Heart left ventricle (tissue), 16 donors: ENCODE measurements at regions of chr3 and their contacts with region 1.

Region 1: GRCh38 chr3:14810070-14810784 is 8.5 kb upstream of the FGD5 start:
- DNase-seq: peak; percentile 61 to 73 (median 65)
- ATAC-seq: peak; percentile 56 to 77 (median 69)
- H3K4me3 ChIP-seq: peak overlapping the region; percentile 56 to 95 (median 77)
- H3K27ac ChIP-seq: peak overlapping the region; percentile 79 to 97 (median 90)
- H3K4me1 ChIP-seq: peaks cover 3 to 67% (median 38%) of the 10 kb centered on the region in 12 donors
- H3K27me3 ChIP-seq: peaks cover 0 to 35% (median 11%) of the 10 kb centered on the region in 9 donors
- CTCF ChIP-seq: no peak
- POLR2A ChIP-seq: no peak

Region 2: DNA sequence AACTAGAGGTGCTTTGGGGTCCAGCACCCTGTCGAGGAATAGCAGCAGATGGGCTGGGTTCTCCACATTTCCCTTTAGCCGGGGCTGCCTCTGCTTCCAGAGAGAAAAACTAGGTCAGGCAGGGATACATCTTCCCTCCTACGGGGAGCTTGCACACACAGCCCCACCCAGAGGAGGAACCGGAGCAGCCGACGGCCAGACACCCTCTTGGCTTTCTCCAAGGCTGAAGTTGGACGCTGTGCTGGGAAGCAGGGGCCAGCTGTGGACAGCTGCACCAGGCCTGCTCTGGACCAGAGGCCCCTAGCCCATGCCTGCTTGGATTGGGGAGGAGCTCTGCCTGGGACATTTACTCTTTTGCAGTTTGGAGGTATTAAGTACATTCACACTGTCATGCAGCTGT is 92.5 kb after region 1 on chr3:
- intact Hi-C with region 1: loop called in 1 of 10 experiments (anchors 2 kb)
- DNase-seq: peak; percentile 76 to 87 (median 87)
- ATAC-seq: peak; percentile 87 to 96 (median 92)
- H3K4me3 ChIP-seq: no peak overlapping the region
- H3K27ac ChIP-seq: peak overlapping the region in 5 of 12 donors; percentile 25 to 47 (median 34)
- H3K4me1 ChIP-seq: peaks cover 0 to 27% (median 12%) of the 10 kb centered on the region in 12 donors
- H3K27me3 ChIP-seq: no peaks in the 10 kb centered on the region
- CTCF ChIP-seq: peak in 5 of 12 donors; percentile 13 to 41 (median 25)
- POLR2A ChIP-seq: no peak